Esophagus muscularis mucosa (tissue), 4 donors: ENCODE measurements at regions of chr16 and their contacts with region 1.

Region 1: GRCh38 chr16:64948056-64948455 is 173.8 kb downstream of the CDH11 start:
- DNase-seq: no peak
- H3K4me3 ChIP-seq: no peak overlapping the region
- H3K27ac ChIP-seq: no peak overlapping the region
- H3K4me1 ChIP-seq: peaks cover 0 to 3% (median 0%) of the 10 kb centered on the region in 4 donors
- H3K27me3 ChIP-seq: no peaks in the 10 kb centered on the region
- CTCF ChIP-seq: no peak
- EP300 ChIP-seq: no peak
- POLR2A ChIP-seq: no peak

Region 2: DNA sequence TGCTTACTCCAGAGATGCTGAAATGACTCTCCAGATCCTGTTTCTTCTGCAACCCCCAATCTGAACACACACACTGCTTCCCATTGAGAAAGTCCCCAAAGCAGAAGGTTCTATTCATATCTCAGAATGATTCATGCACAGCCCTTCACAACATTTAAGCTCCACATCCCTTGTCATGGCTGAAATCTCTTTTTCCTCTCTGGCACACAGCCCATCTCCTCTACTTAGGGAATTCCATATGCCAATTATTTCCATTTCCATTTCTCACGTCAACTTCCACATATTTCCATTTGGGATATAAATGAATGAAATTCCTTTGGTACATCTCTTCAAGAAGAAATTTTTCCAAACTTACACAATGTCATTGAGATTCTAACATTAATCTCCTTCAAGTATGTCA is 54.2 kb after region 1 on chr16:
- intact Hi-C with region 1: loop called (anchors 10 kb)
- DNase-seq: no peak
- H3K4me3 ChIP-seq: no peak overlapping the region
- H3K27ac ChIP-seq: no peak overlapping the region
- H3K4me1 ChIP-seq: no peaks in the 10 kb centered on the region
- H3K27me3 ChIP-seq: no peaks in the 10 kb centered on the region
- CTCF ChIP-seq: no peak
- EP300 ChIP-seq: no peak
- POLR2A ChIP-seq: no peak